Endothelial cell of umbilical vein (primary cell): ENCODE measurements at regions of chr11 and their contacts with region 1.

Region 1: DNA sequence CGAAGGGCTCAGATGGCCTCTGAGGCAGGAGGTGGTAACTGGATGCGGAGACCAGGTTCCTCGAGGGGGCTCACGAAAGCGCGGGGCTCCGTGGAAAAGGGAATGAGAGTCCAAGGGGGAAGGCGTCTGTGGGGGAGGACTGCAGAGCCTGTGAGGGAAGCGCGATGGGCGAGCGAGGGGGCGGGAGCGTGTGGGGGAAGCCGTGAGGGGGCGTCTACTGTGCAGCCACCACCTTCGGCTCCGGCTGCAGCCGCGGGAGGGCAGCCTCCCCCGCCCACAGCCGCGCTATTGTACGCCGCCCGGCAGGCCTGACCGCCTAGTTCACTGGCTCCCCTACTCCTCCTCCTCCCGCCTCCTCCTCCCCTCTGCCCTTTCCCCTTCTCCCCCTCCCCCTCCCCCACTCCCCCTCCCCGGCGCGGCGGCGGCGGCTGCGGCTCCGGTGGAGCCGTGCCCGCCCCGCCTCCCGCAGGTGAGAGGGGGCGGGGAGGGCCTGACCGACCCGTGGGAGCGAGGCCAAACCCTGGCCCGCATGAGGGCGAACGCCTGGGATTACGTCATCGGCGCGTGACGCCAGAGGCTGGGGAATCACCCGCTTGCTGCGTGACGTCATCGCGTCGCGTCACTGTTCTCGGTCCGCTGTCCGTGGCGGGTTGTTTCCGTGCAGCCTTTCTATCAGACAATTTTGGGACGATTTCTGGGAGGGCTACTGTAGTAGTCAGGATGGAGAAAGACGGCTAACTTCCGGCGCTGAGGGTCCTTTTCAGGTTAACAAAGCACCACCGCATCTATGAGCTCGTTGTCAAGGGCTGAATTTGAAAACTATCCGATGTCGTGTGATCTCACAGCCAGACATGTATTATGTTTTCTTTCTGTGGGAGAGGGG is at the start of gene PAK1:
- DNase-seq: peak; percentile 49
- H3K4me3 ChIP-seq: peak within 1 kb of the TSS; percentile 13 to 46 (median 23)
- H3K27ac ChIP-seq: no peak within 1 kb of the TSS
- H3K4me1 ChIP-seq: peaks cover 3% of the 10 kb centered on the region
- H3K27me3 ChIP-seq: peaks cover 19 to 43% of the 10 kb centered on the region in 2 experiments
- CTCF ChIP-seq: peak in 1 of 2 donors; percentile 44
- POLR2A ChIP-seq: no peak
- total RNA-seq, gene PAK1: 11.2 and 12.9 TPM in 2 replicates

Region 2: DNA sequence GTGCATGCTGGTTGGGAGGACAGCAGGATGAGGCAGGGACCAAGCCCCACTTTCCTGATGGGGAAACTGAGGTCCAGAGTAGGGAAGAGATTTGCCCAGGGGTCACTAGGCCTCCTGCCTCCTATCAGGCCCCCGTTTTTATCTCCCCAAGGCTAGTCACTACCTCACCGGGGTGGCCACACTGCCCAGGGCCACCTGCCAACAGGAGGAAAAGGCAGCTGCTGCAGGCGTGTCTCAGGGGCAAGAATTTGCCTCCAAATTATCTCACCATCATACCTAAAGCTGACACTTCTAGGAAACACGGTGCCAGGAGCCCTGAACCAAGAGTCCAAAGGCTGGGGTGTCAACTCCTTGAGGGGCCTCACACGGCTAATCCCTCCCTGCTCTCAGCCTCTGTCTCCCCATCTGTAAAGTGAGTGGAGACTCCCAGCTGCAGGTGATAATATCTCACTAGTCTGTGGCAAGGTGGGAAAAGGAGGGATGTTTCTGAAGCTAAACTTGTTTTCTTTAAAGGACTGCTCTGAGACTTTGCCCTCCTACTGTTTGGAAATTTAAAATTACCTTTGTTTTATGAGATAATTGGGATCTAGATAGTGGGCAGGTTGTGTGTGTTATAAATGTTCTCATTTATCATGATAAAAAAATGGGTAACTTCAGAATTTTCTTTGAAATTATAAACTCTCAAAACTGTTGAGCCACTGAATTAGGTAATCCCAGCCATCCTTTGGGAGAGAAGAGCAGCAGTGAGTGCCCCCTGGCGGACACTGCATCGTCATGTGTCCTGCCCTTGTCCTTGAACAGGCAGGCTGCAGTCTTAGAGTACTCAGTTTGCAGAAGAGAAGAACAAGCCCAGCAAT is 286.0 kb before region 1 on chr11:
- CTCF ChIA-PET with region 1: no interaction called
- POLR2A ChIA-PET with region 1: no interaction called
- dilution Hi-C with region 1: no loop called
- intact Hi-C with region 1: loop called (anchors 10 kb)
- DNase-seq: peak; percentile 75
- H3K4me3 ChIP-seq: no peak overlapping the region
- H3K27ac ChIP-seq: no peak overlapping the region
- H3K4me1 ChIP-seq: no peaks in the 10 kb centered on the region
- H3K27me3 ChIP-seq: no peaks in the 10 kb centered on the region
- CTCF ChIP-seq: peak; percentile 81 to 94
- POLR2A ChIP-seq: no peak

Region 3: DNA sequence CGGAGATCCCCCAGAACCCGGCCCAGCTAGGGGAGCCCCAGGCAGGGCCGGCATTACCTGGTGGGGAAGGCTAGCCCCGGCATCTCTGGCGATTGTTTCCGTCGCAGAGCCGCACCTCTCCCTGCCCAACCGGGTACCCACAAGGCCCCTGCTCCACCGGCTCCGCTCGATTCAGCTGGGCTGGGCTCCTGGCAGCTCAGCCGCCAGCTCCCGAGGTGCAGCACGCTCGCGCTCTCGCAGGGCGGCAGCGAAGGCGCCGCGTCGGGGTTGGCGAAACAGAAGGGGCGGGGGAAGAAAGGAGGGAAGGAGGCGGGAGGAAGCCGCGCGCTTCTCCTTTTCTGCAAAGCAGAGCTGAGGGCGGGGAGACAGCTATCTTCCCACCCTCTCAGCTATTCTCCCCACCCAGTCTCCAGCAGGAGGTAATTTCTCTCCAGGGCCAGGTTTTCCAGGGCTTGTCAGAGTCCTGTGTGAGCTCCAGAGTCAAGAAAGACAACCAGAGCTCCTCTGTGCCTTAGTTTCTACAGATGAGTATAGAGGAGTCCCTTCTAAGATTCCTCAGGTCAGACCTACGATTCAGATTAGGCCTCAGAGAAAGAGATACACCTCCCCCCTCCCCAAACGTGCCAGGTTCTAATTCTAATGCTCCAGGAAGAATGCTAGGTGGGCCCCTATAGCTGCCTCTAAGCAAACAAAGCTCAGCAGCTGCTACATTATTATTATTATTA is 62.2 kb before region 1 on chr11:
- CTCF ChIA-PET with region 1: interaction called, 4 read pairs
- POLR2A ChIA-PET with region 1: no interaction called
- dilution Hi-C with region 1: no loop called
- intact Hi-C with region 1: loop called (anchors 5 kb)
- DNase-seq: peak; percentile 62
- H3K4me3 ChIP-seq: peak overlapping the region; percentile 31 to 38 (median 34)
- H3K27ac ChIP-seq: no peak overlapping the region
- H3K4me1 ChIP-seq: peaks cover 20% of the 10 kb centered on the region
- H3K27me3 ChIP-seq: peaks cover 0 to 3% of the 10 kb centered on the region in 2 experiments
- CTCF ChIP-seq: no peak
- POLR2A ChIP-seq: peak; percentile 27

Region 4: GRCh38 chr11:77503015-77503414 is 29.0 kb after region 1 on chr11:
- CTCF ChIA-PET with region 1: no interaction called
- POLR2A ChIA-PET with region 1: no interaction called
- dilution Hi-C with region 1: no loop called
- intact Hi-C with region 1: no loop called
- DNase-seq: no peak
- H3K4me3 ChIP-seq: no peak overlapping the region
- H3K27ac ChIP-seq: no peak overlapping the region
- H3K4me1 ChIP-seq: peaks cover 12% of the 10 kb centered on the region
- H3K27me3 ChIP-seq: peaks cover 5 to 6% of the 10 kb centered on the region in 2 experiments
- CTCF ChIP-seq: no peak
- POLR2A ChIP-seq: no peak